ENCODE measurements at regions of chr15 and their contacts with region 1.

Region 1: DNA sequence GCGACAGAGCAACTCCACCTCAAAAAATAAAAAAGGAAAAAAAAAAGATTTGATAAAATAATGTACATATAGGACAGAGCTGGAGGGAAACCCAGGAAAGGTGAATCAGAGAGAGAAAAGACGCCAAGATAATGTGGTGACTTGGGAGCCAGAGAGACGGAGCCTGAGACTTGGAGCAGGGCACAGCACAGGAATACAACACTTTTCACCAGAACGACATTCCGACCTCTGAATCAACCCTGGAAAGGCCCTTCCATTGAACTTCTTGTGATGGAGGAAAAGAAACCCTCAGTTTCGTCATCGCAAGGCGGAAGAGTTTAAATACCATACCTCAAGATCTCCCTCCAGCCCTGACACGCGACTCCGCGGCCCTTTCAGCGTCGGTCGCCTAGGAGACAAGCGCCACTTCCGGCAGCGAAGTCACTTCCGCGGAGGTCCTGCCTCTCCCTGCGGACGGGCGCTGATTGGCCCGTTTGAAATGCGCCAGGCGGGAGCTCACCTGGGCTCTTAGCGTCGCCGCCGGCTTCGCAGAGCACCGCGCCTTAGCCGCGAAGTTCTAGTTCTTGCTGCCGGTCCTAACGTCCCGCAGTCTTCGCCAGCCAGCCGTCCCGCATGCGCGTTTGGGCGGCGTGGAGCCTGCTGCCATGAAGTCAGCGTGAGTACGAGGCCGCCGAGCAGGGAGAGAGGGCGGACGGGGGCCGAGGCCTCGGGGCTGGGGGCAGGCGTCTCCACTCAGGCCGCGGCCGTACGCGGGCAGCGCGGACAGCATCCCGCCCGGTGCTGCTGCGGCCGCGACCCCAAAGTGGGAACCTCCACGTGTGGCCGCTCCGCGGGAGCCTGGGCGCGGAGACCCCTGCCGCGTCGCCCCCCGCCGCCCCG is at the start of gene KIF23:
- DNase-seq: peak; percentile 81 to 97 (median 94)
- ATAC-seq: peak; percentile 98
- H3K4me3 ChIP-seq: peak within 1 kb of the TSS; percentile 72 to 75
- H3K4me3 Mint-ChIP-seq: peak within 1 kb of the TSS; percentile 88
- H3K27ac ChIP-seq: no peak within 1 kb of the TSS
- H3K27ac Mint-ChIP-seq: no peak within 1 kb of the TSS
- H3K4me1 ChIP-seq: peaks cover 7% of the 10 kb centered on the region
- H3K4me1 Mint-ChIP-seq: peaks cover 15% of the 10 kb centered on the region
- H3K27me3 ChIP-seq: peaks cover 2 to 5% of the 10 kb centered on the region in 2 experiments
- H3K27me3 Mint-ChIP-seq: peaks cover 21% of the 10 kb centered on the region
- CTCF ChIP-seq: no peak
- total RNA-seq, gene KIF23: 0.81 to 0.95 TPM

Region 2: DNA sequence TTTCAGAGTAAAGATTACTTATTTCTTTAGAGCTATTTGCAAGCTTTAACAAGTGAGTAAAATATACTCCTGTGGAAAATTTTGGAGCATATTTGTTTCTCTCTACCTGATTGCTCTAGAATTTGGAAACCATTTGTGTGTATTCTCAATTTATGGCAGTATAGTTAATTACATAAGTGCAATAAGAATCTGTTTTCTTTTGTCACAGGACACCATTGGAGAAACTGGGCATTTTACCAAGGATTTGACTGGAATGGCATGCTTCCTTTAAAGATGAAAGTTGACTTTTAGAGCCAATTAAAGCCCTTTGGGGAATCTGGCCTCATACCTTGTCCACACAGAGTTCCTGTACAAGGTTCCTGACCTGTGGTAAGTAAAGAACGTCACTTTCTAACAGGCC is 76.9 kb before region 1 on chr15:
- CTCF ChIA-PET with region 1: no interaction called
- POLR2A ChIA-PET with region 1: no interaction called
- intact Hi-C with region 1: no loop called
- DNase-seq: no peak
- ATAC-seq: no peak
- H3K4me3 ChIP-seq: no peak overlapping the region
- H3K4me3 Mint-ChIP-seq: no peak overlapping the region
- H3K27ac ChIP-seq: no peak overlapping the region
- H3K27ac Mint-ChIP-seq: no peak overlapping the region
- H3K4me1 ChIP-seq: no peaks in the 10 kb centered on the region
- H3K4me1 Mint-ChIP-seq: no peaks in the 10 kb centered on the region
- H3K27me3 ChIP-seq: no peaks in the 10 kb centered on the region
- H3K27me3 Mint-ChIP-seq: peaks cover 3% of the 10 kb centered on the region
- CTCF ChIP-seq: no peak

Region 3: DNA sequence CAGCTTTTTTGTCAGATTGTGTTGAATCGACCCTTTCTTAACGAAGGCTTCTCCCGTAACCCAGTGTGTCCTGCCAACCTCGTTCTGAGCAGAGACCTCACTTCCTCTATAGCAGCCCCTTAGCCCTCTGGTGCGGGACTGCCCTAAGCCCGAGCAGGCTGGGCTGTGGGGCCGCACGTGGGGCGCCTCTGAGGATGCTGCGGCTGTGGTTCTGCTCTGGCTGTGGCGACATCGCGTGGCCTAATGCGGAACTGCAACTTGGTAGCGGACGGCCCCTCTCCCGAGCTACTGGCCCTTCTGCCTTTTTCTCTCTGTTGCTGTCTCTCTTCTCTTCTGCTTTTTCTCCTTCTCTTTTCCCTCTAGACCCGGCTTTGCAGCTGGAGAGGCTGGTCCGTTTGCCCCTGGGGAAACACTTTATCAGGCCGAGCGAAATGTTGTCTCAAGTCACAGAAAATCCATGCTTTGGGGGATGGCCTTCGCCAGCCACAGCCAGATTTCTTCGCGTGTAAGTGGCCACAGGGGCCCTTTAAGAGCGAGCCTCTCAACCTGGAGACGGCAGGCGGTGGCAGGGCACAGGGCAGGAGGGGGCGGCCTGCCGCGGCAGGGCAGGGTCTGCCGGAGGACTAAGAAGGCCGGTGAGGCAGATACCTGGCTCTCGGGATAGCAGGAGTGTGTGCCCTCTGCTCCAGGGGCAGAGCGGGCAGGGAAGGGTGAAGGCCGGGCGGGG is 19.3 kb before region 1 on chr15:
- CTCF ChIA-PET with region 1: interaction called, 11 read pairs
- POLR2A ChIA-PET with region 1: no interaction called
- intact Hi-C with region 1: no loop called
- DNase-seq: peak; percentile 66 to 90 (median 82)
- ATAC-seq: peak; percentile 99
- H3K4me3 ChIP-seq: no peak overlapping the region
- H3K4me3 Mint-ChIP-seq: no peak overlapping the region
- H3K27ac ChIP-seq: no peak overlapping the region
- H3K27ac Mint-ChIP-seq: no peak overlapping the region
- H3K4me1 ChIP-seq: peaks cover 10% of the 10 kb centered on the region
- H3K4me1 Mint-ChIP-seq: peaks cover 12% of the 10 kb centered on the region
- H3K27me3 ChIP-seq: no peaks in the 10 kb centered on the region
- H3K27me3 Mint-ChIP-seq: peaks cover 4% of the 10 kb centered on the region
- CTCF ChIP-seq: peak; percentile 96

Region 4: GRCh38 chr15:69452692-69453521 is 38.8 kb after region 1 on chr15 and contains the start of gene RPLP1:
- CTCF ChIA-PET with region 1: no interaction called
- POLR2A ChIA-PET with region 1: interaction called, 10 read pairs
- intact Hi-C with region 1: loop called (anchors 1 kb)
- DNase-seq: peak; percentile 91 to 97 (median 95)
- ATAC-seq: peak; percentile 88
- H3K4me3 ChIP-seq: peak within 1 kb of the TSS; percentile 86 to 91
- H3K4me3 Mint-ChIP-seq: peak within 1 kb of the TSS; percentile 97
- H3K27ac ChIP-seq: peak within 1 kb of the TSS; percentile 75 to 92
- H3K27ac Mint-ChIP-seq: peak within 1 kb of the TSS; percentile 99
- H3K4me1 ChIP-seq: peaks cover 32% of the 10 kb centered on the region
- H3K4me1 Mint-ChIP-seq: peaks cover 47% of the 10 kb centered on the region
- H3K27me3 ChIP-seq: no peaks in the 10 kb centered on the region
- H3K27me3 Mint-ChIP-seq: no peaks in the 10 kb centered on the region
- CTCF ChIP-seq: no peak
- total RNA-seq, gene RPLP1: 2,675 to 2,824 TPM

Region 5: GRCh38 chr15:69462493-69463181 is 48.6 kb after region 1 on chr15:
- CTCF ChIA-PET with region 1: interaction called, 4 read pairs
- POLR2A ChIA-PET with region 1: no interaction called
- intact Hi-C with region 1: loop called in 1 of 2 experiments (anchors 1 kb)
- DNase-seq: peak; percentile 84 to 96 (median 93)
- ATAC-seq: peak; percentile 97
- H3K4me3 ChIP-seq: peak overlapping the region; percentile 69 to 72
- H3K4me3 Mint-ChIP-seq: peak overlapping the region; percentile 91
- H3K27ac ChIP-seq: peak overlapping the region; percentile 66 to 70
- H3K27ac Mint-ChIP-seq: peak overlapping the region; percentile 93
- H3K4me1 ChIP-seq: peaks cover 21% of the 10 kb centered on the region
- H3K4me1 Mint-ChIP-seq: peaks cover 26% of the 10 kb centered on the region
- H3K27me3 ChIP-seq: no peaks in the 10 kb centered on the region
- H3K27me3 Mint-ChIP-seq: no peaks in the 10 kb centered on the region
- CTCF ChIP-seq: peak; percentile 81